Transverse colon (tissue), 4 donors: ENCODE measurements at regions of chr2 and their contacts with region 1.

Region 1: DNA sequence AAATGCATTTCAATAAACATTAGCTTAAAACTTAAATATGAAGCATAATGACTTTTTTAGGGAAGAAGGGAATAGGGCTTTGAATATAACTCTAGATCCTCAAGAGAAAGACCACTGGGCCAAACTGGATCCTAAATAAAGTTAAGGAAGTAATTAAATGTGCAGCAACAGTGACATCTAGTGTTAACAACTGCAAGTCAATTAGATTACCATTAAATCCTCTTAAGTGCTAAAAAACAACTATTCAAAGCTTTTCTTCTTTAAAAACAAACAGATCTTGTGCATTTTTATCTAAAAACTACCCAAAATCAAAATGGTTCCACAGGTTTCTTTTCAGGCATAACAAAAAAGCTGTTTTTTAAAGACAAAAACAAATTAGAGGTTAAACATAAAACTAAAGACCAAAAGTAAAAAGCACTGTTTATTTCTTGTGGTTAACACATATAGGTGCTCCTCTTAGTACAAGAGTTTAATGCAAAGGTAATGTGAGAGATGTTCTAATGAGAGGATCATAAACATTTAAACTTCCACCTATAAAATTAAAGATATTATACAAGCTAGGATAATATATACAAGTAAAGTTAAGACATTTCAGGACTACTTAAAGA is 111.4 kb downstream of the THADA start:
- DNase-seq: no peak
- H3K4me3 ChIP-seq: no peak overlapping the region
- H3K27ac ChIP-seq: peak overlapping the region; percentile 66 to 79 (median 70)
- H3K4me1 ChIP-seq: peaks cover 8 to 40% (median 10%) of the 10 kb centered on the region in 4 donors
- H3K27me3 ChIP-seq: no peaks in the 10 kb centered on the region
- CTCF ChIP-seq: peak; percentile 62 to 87 (median 65)
- EP300 ChIP-seq: no peak
- POLR2A ChIP-seq: no peak

Region 2: GRCh38 chr2:42598656-42599055 is 885.8 kb before region 1 on chr2:
- in situ Hi-C with region 1: no loop called
- intact Hi-C with region 1: no loop called
- DNase-seq: no peak
- H3K4me3 ChIP-seq: no peak overlapping the region
- H3K27ac ChIP-seq: no peak overlapping the region
- H3K4me1 ChIP-seq: peaks cover 0 to 40% (median 21%) of the 10 kb centered on the region in 4 donors
- H3K27me3 ChIP-seq: no peaks in the 10 kb centered on the region
- CTCF ChIP-seq: no peak
- EP300 ChIP-seq: no peak
- POLR2A ChIP-seq: no peak

Region 3: GRCh38 chr2:42835577-42836371 is 648.7 kb before region 1 on chr2:
- in situ Hi-C with region 1: loop called in 2 of 4 experiments (anchors 10 to 25 kb)
- intact Hi-C with region 1: no loop called
- DNase-seq: peak; percentile 38
- H3K4me3 ChIP-seq: no peak overlapping the region
- H3K27ac ChIP-seq: peak overlapping the region; percentile 42 to 54 (median 48)
- H3K4me1 ChIP-seq: peaks cover 0 to 6% (median 2%) of the 10 kb centered on the region in 4 donors
- H3K27me3 ChIP-seq: no peaks in the 10 kb centered on the region
- CTCF ChIP-seq: no peak
- EP300 ChIP-seq: no peak
- POLR2A ChIP-seq: no peak

Region 4: GRCh38 chr2:42959234-42960001 is 525.0 kb before region 1 on chr2:
- in situ Hi-C with region 1: loop called in 2 of 4 experiments (anchors 10 to 25 kb)
- intact Hi-C with region 1: no loop called
- DNase-seq: no peak
- H3K4me3 ChIP-seq: no peak overlapping the region
- H3K27ac ChIP-seq: peak overlapping the region; percentile 66 to 76 (median 70)
- H3K4me1 ChIP-seq: peaks cover 13 to 46% (median 27%) of the 10 kb centered on the region in 4 donors
- H3K27me3 ChIP-seq: no peaks in the 10 kb centered on the region
- CTCF ChIP-seq: no peak
- EP300 ChIP-seq: no peak
- POLR2A ChIP-seq: no peak

Region 5: DNA sequence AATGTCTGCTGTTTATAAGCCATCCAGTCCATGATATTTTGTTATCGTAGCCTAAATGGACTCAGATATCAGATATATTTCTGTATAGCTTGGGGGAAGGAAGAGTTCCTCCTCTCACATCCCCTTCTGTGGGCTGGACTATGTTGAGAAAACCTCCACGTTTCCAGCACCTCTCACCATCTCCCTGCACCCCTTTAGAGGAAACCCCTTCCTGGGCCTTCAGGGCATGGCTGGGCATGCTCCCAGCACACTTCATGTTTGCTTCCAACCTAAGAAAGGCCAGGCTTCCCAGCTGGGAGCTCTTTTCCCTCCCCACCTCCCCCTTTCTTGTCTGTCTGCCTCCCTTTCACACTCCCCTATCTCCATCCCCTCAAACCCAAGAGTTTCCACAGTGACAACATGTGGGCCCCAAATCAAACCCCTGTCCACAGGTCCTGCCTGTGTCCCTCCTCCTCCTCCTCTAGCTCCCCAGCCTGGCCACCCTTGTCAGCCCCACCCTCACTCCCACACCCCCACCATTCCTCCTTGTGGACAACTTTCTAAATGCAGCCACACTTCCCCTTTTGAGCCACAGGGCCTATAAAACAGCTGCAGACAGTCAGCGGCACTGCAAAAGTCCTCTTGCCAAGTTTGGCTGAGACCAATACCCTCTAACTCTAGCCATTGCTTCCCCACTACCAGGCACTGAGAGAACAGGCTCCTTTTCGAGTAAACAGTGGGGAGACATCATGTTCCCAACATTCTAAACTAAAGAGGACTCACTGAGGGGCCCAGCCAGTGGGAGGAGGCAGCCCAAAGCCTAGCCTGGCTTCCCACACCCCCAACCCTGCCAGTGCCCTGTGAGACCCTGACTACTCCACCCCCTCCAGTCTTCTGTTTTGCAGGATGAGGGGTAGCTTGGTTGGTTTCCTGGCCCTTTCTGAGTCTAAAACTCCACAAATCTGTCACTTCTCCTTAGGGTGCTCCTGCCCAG is 378.6 kb before region 1 on chr2:
- in situ Hi-C with region 1: loop called in 1 of 4 experiments (anchors 25 kb)
- intact Hi-C with region 1: no loop called
- DNase-seq: peak; percentile 65
- H3K4me3 ChIP-seq: no peak overlapping the region
- H3K27ac ChIP-seq: peak overlapping the region; percentile 71 to 84 (median 82)
- H3K4me1 ChIP-seq: peaks cover 12 to 79% (median 33%) of the 10 kb centered on the region in 4 donors
- H3K27me3 ChIP-seq: no peaks in the 10 kb centered on the region
- CTCF ChIP-seq: peak; percentile 38 to 80 (median 45)
- EP300 ChIP-seq: no peak
- POLR2A ChIP-seq: peak; percentile 18

Region 6: DNA sequence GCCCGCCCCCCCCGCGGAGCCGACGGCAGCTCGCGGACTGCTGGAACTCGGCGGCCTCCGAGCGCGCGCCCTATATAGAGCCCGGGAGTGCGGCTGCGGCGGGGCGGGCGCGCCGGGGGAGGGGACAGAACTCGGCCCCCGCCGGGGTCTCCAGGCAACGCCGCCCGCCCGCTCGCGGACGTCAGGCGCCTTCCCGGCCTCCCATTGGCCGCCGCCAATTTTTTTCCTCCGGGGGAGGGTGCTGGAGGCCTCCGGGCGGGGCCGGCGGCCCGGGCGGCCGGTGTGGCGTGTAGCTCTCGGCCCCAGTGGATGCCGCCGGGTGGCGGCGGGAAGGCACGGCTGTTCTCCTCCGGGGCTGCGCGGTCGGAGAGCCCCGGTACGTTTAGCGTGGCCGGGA is 257.9 kb before region 1 on chr2 and contains the start of gene ZFP36L2:
- in situ Hi-C with region 1: loop called (anchors 5 to 10 kb)
- intact Hi-C with region 1: loop called (anchors 1 kb)
- DNase-seq: peak; percentile 97
- H3K4me3 ChIP-seq: peak within 1 kb of the TSS; percentile 85 to 91 (median 90)
- H3K27ac ChIP-seq: peak within 1 kb of the TSS; percentile 96 to 100 (median 99)
- H3K4me1 ChIP-seq: peaks cover 15 to 35% (median 32%) of the 10 kb centered on the region in 4 donors
- H3K27me3 ChIP-seq: no peaks in the 10 kb centered on the region
- CTCF ChIP-seq: peak in 1 of 5 experiments; percentile 40
- EP300 ChIP-seq: no peak
- POLR2A ChIP-seq: peak; percentile 98
- total RNA-seq, gene ZFP36L2: 114 to 305 (median 208) TPM

Region 7: DNA sequence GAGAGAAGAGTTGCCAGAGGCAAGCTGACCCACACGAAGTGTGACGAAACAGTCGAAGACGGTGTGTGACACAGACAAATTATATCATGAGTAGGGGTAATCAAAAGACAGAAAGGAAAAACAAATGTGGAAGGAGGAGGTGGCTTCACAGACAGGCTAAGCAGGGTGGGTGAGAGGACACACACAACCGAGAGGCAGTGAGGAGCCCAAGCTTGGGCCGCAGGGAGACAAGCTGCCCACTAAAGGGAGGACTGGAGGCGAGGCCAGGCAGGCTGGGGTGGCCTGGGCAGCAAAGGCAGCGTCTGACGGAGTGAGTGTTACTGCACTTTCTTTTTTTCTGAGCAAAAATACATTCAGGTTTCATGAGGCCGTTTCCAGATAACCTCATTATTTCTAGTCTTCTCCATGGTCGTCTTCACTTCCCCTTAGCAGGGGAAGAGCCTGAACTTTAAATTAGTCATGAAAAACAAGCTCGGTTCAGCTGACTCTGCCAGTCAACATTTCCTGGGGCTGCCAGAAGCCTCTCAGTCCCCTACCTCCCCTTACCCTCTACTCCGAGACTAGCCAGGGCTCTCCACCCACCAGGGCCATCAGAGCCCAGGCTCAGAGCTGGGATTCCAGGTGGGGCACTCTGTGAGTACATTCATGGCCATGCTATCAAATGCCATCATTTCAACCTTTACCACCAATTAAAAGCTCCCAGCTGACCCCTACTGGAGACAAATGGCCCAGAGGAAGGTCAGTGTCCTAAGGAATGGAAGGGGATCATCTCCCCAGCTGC is 244.3 kb before region 1 on chr2:
- in situ Hi-C with region 1: loop called in 3 of 4 experiments (anchors 10 kb)
- intact Hi-C with region 1: no loop called
- DNase-seq: no peak
- H3K4me3 ChIP-seq: no peak overlapping the region
- H3K27ac ChIP-seq: peak overlapping the region; percentile 19 to 65 (median 44)
- H3K4me1 ChIP-seq: peaks cover 0 to 3% (median 0%) of the 10 kb centered on the region in 4 donors
- H3K27me3 ChIP-seq: no peaks in the 10 kb centered on the region
- CTCF ChIP-seq: no peak
- EP300 ChIP-seq: no peak
- POLR2A ChIP-seq: no peak

Region 8: DNA sequence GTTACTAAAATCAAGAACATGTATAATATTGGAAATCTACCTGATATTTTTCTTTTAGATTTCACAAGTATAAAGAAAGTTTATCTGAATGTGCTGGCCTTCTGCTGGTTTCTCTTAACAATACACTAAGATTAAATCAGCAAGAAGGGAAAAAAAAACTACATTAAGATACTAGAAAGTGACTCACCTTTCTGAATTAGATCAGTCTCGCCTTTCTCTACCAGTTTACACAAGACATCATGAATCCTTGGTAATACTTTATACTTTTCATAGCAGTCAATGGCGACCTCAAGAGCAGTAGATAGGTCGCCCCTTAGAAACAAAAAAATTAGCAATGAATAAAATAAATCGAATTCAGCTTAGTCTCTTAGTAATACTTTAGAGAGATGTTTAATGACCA is 450.1 kb after region 1 on chr2:
- in situ Hi-C with region 1: no loop called
- intact Hi-C with region 1: no loop called
- DNase-seq: no peak
- H3K4me3 ChIP-seq: no peak overlapping the region
- H3K27ac ChIP-seq: no peak overlapping the region
- H3K4me1 ChIP-seq: no peaks in the 10 kb centered on the region
- H3K27me3 ChIP-seq: no peaks in the 10 kb centered on the region
- CTCF ChIP-seq: no peak
- EP300 ChIP-seq: no peak
- POLR2A ChIP-seq: no peak